Gastrocnemius medialis (tissue), 4 donors: ENCODE measurements at regions of chr9 and their contacts with region 1.

Region 1: GRCh38 chr9:111957856-111958652 is 61.4 kb downstream of the UGCG start:
- DNase-seq: no peak
- ATAC-seq: peak; percentile 75 to 81
- H3K4me3 ChIP-seq: peak overlapping the region in 1 of 4 donors; percentile 24
- H3K27ac ChIP-seq: peak overlapping the region; percentile 27 to 73 (median 50)
- H3K4me1 ChIP-seq: peaks cover 12 to 19% of the 10 kb centered on the region in 2 donors
- H3K27me3 ChIP-seq: no peaks in the 10 kb centered on the region
- CTCF ChIP-seq: no peak
- POLR2A ChIP-seq: no peak

Region 2: DNA sequence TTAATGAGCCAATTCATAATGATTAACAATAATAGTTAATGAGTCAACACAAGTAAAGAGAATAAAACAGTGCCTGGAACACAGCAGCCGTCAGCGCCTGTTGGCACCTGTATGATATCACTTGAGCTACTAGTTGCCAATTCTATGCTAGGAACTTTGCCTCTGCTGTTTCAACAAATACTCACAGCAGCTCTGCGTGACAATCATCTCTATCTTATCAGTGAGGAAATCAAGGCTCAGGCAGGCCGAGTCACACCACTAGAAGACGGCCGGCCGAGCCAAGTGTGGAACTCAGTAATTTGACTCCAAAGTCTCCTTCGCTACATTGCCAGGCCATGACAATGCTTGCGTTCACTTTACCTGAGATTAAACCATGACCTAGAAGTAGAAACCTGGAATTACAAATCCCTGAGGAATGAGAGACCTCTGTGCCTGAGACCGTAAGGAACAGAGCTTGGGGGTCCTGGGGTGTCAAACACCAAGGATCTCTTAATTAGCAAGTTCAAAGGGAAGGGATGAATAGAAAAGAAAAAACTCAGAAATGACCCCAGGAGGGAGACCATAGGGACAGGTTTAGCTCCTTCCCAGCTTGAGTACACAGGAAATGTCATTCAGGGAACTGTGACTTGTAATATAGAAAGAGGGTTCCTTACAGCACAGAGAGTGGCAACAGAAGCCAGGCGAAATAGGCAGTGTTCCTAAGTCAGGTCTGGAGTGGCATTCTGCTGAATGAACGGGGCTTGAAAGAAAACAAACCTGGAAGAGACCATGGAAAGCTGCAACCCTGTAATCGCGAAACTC is 108.0 kb after region 1 on chr9:
- in situ Hi-C with region 1: no loop called
- intact Hi-C with region 1: loop called (anchors 5 kb)
- DNase-seq: peak in 1 of 2 donors; percentile 59
- ATAC-seq: peak; percentile 27 to 73
- H3K4me3 ChIP-seq: no peak overlapping the region
- H3K27ac ChIP-seq: peak overlapping the region; percentile 33 to 54 (median 52)
- H3K4me1 ChIP-seq: peaks cover 3 to 6% of the 10 kb centered on the region in 2 donors
- H3K27me3 ChIP-seq: no peaks in the 10 kb centered on the region
- CTCF ChIP-seq: no peak
- POLR2A ChIP-seq: no peak